A673 (cell line): ENCODE measurements at regions of chr7 and their contacts with region 1.

Region 1: DNA sequence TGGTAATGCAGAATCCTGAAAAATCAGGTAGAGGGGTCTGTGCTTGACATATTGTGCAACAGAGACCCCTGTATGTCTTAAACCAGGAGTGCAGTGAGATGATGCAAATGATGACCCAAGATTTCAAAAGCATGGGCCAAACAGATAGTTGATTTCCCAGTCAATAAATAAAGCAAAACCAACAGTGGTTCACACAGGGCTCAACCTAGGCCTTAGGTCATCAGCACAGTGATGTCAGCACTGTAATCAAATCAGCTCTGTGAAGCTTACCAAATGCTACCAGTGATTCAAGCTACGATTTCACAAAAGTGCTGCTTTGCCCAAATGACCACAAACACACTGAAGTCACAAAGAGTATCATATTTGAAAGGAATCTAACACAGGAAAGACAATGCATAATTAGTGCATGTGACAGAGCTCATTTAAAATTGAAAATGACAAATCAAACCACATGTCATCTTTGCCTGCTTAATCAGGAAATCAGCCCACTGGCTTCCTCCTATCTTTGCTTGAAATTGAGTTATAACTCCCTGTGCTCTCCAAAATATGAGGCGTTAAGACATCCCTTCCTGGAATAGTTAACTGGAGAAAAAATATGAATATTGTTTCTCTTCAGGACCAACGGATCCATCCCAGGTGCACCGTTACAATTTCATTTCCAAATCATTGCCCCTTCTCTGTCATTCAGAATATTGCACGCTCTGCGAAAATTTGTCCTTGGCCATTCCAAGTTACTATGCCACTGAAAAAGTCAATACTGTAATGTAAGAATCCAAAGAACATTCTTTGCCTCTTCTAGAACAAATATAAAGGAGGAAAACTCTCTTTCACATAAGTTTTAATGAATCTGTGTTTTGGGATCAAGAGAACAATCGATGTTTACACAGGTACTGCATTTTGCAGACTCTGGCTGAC is 41.9 kb upstream of the ASL start:
- DNase-seq: no peak
- H3K4me3 ChIP-seq: peak overlapping the region; percentile 5
- H3K27ac ChIP-seq: peak overlapping the region; percentile 78
- H3K4me1 ChIP-seq: peaks cover 26% of the 10 kb centered on the region
- H3K27me3 ChIP-seq: no peaks in the 10 kb centered on the region
- CTCF ChIP-seq: no peak

Region 2: DNA sequence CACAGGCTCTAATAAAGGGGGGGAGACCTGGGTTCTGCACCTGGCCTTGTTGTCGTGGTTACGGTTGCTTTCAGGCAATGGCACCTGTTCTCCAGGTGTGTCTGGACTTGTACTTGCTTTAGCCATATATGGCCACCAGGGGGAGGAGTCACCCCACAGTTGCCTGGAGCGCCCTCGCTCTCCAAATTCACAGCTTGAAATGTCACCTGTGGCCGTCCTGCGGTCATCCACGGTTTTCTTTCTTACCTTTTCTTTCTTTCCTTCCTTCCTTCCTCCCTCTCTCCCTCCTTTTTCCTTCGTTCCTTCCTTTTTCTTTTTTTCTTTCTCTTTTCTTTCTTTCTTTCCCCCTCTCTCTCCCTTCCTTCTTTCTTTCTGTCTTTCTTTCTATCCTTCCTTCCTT is 817.3 kb before region 1 on chr7:
- CTCF ChIA-PET with region 1: no interaction called
- POLR2A ChIA-PET with region 1: no interaction called
- intact Hi-C with region 1: no loop called
- DNase-seq: peak; percentile 40
- H3K4me3 ChIP-seq: no peak overlapping the region
- H3K27ac ChIP-seq: no peak overlapping the region
- H3K4me1 ChIP-seq: no peaks in the 10 kb centered on the region
- H3K27me3 ChIP-seq: no peaks in the 10 kb centered on the region
- CTCF ChIP-seq: peak; percentile 75

Region 3: DNA sequence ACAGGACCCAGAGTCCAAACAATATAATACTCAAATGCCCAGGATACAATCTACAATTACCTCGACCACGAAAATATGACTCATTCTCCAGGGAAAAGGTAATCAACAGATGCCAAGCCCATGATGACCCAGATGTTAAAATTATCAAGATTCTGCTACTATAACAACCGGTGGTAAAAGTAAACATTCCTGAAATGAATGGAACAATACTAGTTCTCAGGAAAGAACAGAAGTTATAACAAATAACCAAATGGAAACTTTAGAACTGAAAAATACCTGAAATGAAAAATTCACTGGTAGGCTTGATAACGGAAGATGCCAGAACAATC is 17.6 kb before region 1 on chr7:
- CTCF ChIA-PET with region 1: interaction called, 21 read pairs
- POLR2A ChIA-PET with region 1: no interaction called
- intact Hi-C with region 1: no loop called
- DNase-seq: no peak
- H3K4me3 ChIP-seq: no peak overlapping the region
- H3K27ac ChIP-seq: no peak overlapping the region
- H3K4me1 ChIP-seq: no peaks in the 10 kb centered on the region
- H3K27me3 ChIP-seq: no peaks in the 10 kb centered on the region
- CTCF ChIP-seq: no peak

Region 4: DNA sequence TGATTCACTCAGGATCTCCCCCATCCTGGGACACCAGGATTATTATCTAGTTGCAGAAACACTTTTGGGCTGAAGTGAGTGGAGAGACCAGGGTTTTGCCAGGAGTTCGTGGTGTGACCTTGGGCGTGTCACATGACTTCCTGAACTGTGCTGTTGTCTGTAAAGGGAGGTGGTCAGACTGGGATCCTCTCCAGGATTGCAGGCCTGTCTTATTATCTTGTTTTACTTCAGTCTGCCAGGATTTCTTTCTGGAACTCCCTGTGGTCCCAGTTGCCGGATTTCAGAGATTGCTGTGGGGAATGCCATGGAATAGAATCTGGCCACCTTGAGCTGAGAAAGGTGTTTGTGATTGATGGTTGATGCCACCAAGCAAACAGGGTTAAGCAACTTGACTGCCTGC is 116.7 kb after region 1 on chr7:
- CTCF ChIA-PET with region 1: no interaction called
- POLR2A ChIA-PET with region 1: no interaction called
- intact Hi-C with region 1: no loop called
- DNase-seq: no peak
- H3K4me3 ChIP-seq: no peak overlapping the region
- H3K27ac ChIP-seq: no peak overlapping the region
- H3K4me1 ChIP-seq: no peaks in the 10 kb centered on the region
- H3K27me3 ChIP-seq: no peaks in the 10 kb centered on the region
- CTCF ChIP-seq: no peak

Region 5: DNA sequence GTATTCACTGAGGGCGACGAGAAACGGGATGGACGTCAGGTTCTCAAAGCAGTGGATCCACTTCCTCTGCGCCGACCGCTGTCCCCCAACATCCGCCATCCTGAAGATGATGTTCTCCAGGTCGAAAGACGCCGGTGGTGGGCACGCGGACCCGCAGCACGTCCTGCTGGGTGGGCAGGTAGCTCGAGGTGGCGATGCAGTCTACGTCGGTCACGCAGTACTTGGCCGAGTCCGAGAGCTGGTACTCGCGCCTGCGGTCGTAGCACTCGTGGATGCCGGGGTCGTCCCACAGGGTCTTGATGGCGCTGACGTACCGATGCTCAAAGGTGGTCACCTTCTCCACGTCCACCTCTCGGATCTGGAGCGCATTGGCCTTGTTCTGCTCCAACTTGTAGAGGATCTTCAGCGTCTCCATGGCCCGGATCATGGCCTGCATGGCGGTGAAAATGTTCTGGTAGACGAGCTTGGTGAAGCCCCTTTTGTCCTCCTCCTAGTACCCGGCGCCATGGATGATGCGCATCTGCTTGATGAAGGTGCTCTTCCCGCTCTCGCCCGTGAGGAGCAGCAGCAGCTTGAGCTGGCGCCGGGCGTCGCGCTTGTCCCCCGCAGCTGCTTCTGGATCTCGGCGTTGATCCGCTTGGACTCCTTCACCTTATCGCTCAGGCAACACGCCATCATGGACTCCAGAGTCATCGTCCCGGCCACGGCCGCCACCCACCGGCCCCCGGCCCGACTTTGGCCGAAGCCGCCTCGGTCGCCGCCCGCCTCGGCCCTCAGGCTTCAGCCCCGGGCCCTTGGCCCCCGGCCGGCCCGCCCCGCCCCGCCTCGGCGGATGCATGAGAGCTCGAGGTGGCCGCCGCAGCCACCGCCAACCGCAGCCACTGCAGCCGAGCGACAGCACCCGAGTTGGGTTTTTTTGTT is 472.1 kb after region 1 on chr7:
- CTCF ChIA-PET with region 1: no interaction called
- POLR2A ChIA-PET with region 1: no interaction called
- intact Hi-C with region 1: no loop called
- DNase-seq: no peak
- H3K4me3 ChIP-seq: peak overlapping the region; percentile 28
- H3K27ac ChIP-seq: no peak overlapping the region
- H3K4me1 ChIP-seq: no peaks in the 10 kb centered on the region
- H3K27me3 ChIP-seq: no peaks in the 10 kb centered on the region
- CTCF ChIP-seq: no peak

Region 6: GRCh38 chr7:66542528-66543269 is 509.0 kb after region 1 on chr7:
- CTCF ChIA-PET with region 1: no interaction called
- POLR2A ChIA-PET with region 1: interaction called, 10 read pairs
- intact Hi-C with region 1: no loop called
- DNase-seq: no peak
- H3K4me3 ChIP-seq: no peak overlapping the region
- H3K27ac ChIP-seq: no peak overlapping the region
- H3K4me1 ChIP-seq: no peaks in the 10 kb centered on the region
- H3K27me3 ChIP-seq: no peaks in the 10 kb centered on the region
- CTCF ChIP-seq: no peak

Region 7: DNA sequence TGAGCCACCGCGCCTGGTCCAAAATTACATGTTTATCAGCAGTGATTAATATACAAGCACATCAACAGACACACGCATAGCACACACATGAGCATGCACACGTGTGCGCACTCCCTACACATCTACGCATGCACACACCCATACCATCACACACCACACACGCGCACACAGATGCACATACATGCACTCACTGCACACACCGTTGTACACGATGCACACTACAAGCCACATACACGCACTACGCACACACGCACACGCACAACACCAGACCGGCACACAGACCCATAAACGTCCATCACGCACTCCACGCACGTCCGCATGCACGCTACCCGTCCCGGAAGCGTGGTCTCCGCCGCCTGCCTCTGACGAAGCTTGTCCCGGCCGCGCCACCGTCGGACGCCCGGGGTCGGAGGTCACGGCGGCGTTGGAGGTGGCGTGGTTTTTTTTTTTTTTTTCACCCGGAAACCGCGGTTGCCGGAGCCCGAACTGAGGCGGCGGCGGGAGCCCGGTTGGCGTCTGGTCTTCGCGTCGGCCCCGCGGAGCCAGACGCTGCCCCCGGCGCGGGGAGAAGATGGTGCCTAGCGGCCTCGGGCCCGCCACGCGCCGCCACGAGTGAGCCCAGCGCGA is 887.2 kb after region 1 on chr7 and contains the start of gene TMEM248:
- CTCF ChIA-PET with region 1: interaction called, 11 read pairs
- POLR2A ChIA-PET with region 1: no interaction called
- intact Hi-C with region 1: no loop called
- DNase-seq: peak; percentile 94
- H3K4me3 ChIP-seq: peak within 1 kb of the TSS; percentile 83
- H3K27ac ChIP-seq: peak within 1 kb of the TSS; percentile 86
- H3K4me1 ChIP-seq: peaks cover 3% of the 10 kb centered on the region
- H3K27me3 ChIP-seq: no peaks in the 10 kb centered on the region
- CTCF ChIP-seq: no peak
- total RNA-seq, gene TMEM248: 77.0 and 78.8 TPM in 2 replicates